Cardiac septum (tissue), 1 donor: ENCODE measurements at regions of chr12 and their contacts with region 1.

Region 1: GRCh38 chr12:32455607-32456071 is 56.3 kb downstream of the FGD4 start:
- DNase-seq: no peak

Region 2: GRCh38 chr12:32365473-32366064 is 90.1 kb before region 1 on chr12:
- intact Hi-C with region 1: loop called (anchors 5 kb)
- DNase-seq: no peak

Region 3: DNA sequence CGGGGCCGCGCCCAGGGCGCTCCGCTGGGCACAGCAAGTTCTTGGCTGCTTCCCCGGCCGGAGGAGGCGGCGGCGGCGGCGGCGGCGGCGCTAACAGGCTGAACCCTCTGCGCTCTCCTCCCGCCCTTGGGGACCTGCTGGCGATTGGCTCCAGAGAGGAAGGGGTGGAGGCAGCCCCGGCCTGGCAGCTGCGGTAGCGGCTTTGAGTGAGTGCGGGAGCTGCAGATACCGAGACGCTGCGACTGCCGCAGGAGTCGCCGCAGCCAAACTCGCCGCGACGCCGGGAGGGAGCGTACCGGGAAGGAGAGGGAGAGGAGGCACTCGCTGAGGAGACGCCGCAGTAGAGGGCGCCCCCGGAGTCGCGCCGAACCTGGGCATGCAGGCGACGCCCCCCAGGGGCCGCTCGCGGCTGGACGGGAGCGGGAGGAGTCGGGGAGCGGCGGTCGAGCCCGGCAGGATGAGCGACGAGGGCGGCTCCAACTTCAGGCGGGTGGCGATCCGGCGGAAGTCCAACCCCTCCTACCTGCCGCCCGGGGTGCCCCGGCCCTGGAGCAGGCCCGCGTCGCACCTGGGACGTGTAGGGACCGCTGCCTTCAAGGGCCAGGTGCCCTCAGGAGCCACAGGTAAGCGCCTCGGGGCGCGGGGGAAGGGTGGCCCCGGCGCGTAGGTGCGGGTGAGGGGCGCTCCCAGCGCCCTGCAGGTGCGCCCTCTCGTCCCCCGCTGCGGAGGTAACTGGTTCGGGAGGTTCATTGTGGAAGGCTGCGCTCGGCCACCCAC is 56.1 kb before region 1 on chr12 and contains the start of gene FGD4:
- intact Hi-C with region 1: loop called (anchors 2 kb)
- DNase-seq: peak; percentile 90
- total RNA-seq, gene FGD4: 19.4 TPM

Region 4: DNA sequence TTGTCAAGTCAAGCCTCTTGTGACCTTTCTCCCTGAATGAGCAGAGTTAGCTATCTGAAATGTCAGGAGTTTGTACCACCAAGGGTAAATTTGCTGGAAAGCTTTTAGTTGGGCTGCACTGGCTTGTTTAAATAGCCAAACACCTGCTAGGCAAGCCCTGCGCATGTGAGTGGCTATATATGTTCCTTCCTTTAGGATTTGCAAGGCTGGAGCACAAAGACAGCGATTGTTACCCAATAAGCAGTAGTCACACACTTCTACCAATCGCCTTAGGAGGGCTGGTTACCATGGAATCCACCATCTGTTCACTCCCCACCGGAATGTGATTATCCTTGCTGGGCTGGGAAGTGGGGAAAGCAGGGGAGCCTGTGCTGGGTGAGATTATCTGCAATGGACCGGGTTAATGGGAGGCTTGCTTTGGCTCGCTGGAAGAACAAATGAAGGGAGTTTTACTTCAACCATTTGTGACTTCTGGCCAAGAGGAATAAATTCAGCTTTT is 46.2 kb after region 1 on chr12:
- intact Hi-C with region 1: no loop called
- DNase-seq: no peak

Region 5: GRCh38 chr12:32541851-32542258 is 86.2 kb after region 1 on chr12:
- intact Hi-C with region 1: loop called (anchors 2 kb)
- DNase-seq: no peak

Region 6: GRCh38 chr12:32659908-32660440 is 204.3 kb after region 1 on chr12:
- intact Hi-C with region 1: loop called (anchors 2 kb)
- DNase-seq: no peak

Region 7: GRCh38 chr12:32671930-32672780 is 216.5 kb after region 1 on chr12:
- intact Hi-C with region 1: loop called (anchors 5 kb)
- DNase-seq: no peak